PC-9 (cell line): ENCODE measurements at regions of chr13 and their contacts with region 1.

Region 1: DNA sequence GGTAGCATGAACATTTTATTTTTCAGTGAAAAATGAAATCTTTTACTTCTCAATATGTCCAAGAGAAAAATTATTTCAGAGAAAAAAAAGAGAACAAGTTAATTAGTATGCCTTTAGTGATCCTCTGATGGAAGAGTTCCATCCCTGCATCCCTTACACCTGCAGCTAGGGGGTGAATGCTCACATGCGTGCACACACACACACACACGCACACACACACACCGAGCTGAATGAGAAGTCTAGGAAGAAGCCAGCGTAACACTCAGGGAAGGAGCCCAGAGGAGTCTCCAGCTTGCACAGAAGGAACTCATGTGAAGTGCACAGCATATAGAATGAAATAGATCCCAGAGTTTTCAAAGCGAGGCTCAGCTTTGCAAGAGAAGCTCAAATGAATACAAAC is 510.5 kb downstream of the IRS2 start:
- DNase-seq: no peak
- H3K4me3 ChIP-seq: no peak overlapping the region
- H3K27ac ChIP-seq: no peak overlapping the region
- H3K4me1 ChIP-seq: peaks cover 47% of the 10 kb centered on the region
- H3K27me3 ChIP-seq: no peaks in the 10 kb centered on the region
- CTCF ChIP-seq: peak; percentile 46; the same call in 1 of the 2 replicates

Region 2: DNA sequence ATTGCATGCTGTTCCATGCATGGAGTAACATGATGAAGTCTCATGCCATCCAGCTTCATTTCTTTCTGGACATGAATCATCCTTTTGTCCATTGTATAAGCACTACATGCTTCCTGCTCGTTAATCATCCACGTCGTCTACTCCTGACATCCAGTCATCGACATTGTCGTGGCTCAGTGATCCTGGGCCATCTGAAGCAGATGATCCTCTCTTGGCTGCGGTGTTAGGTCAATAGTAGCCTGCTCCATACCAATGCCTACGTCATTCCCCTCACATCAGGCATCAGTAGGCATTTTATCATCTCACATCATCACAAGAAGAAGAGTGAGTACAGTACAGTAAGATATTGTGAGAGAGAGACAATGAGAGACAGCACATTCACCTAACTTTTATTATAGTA is 654.4 kb before region 1 on chr13:
- CTCF ChIA-PET with region 1: no interaction called
- POLR2A ChIA-PET with region 1: no interaction called
- intact Hi-C with region 1: no loop called
- DNase-seq: no peak
- H3K4me3 ChIP-seq: no peak overlapping the region
- H3K27ac ChIP-seq: no peak overlapping the region
- H3K4me1 ChIP-seq: no peaks in the 10 kb centered on the region
- H3K27me3 ChIP-seq: 0 out of 2 replicates have a peak, but pooled peaks cover 7% of the 10 kb centered on the region
- CTCF ChIP-seq: no peak

Region 3: GRCh38 chr13:108915634-108916512 is 360.0 kb before region 1 on chr13:
- CTCF ChIA-PET with region 1: no interaction called
- POLR2A ChIA-PET with region 1: no interaction called
- intact Hi-C with region 1: loop called (anchors 5 kb)
- DNase-seq: peak; percentile 81 to 96
- H3K4me3 ChIP-seq: peak overlapping the region; percentile 47
- H3K27ac ChIP-seq: peak overlapping the region; percentile 96
- H3K4me1 ChIP-seq: peaks cover 56% of the 10 kb centered on the region
- H3K27me3 ChIP-seq: no peaks in the 10 kb centered on the region
- CTCF ChIP-seq: no peak

Region 4: GRCh38 chr13:109309625-109310363 is 33.9 kb after region 1 on chr13:
- CTCF ChIA-PET with region 1: no interaction called
- POLR2A ChIA-PET with region 1: no interaction called
- intact Hi-C with region 1: no loop called
- DNase-seq: no peak
- H3K4me3 ChIP-seq: no peak overlapping the region
- H3K27ac ChIP-seq: no peak overlapping the region
- H3K4me1 ChIP-seq: no peaks in the 10 kb centered on the region
- H3K27me3 ChIP-seq: no peaks in the 10 kb centered on the region
- CTCF ChIP-seq: no peak

Region 5: DNA sequence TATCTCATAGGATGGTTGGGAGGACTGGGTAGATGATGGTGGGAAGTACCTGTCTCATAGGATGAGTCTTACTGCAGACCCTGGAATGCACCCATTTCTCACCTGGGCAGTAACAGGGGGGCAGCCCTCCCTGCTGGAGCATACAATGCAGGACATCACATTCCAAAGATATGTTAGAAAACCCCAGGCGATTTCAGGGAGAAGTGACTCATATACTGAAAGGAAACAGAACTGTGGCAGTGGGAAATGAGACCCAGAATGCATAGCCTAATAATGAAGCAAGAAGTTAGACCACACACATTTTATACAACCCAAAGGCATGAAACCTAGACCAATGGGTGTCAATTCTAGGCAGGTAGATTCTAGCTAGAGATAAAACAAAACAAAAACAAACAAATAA is 107.8 kb after region 1 on chr13:
- CTCF ChIA-PET with region 1: no interaction called
- POLR2A ChIA-PET with region 1: interaction called, 11 read pairs
- intact Hi-C with region 1: loop called (anchors 2 kb)
- DNase-seq: peak; percentile 35 to 95
- H3K4me3 ChIP-seq: no peak overlapping the region
- H3K27ac ChIP-seq: peak overlapping the region; percentile 61
- H3K4me1 ChIP-seq: peaks cover 26% of the 10 kb centered on the region
- H3K27me3 ChIP-seq: no peaks in the 10 kb centered on the region
- CTCF ChIP-seq: 0 out of 2 replicates have a peak, but pooled peaks have one; percentile 21

Region 6: GRCh38 chr13:109667056-109667455 is 391.2 kb after region 1 on chr13:
- CTCF ChIA-PET with region 1: no interaction called
- POLR2A ChIA-PET with region 1: no interaction called
- intact Hi-C with region 1: loop called (anchors 5 kb)
- DNase-seq: peak; percentile 38 to 90
- H3K4me3 ChIP-seq: peak overlapping the region; percentile 52
- H3K27ac ChIP-seq: peak overlapping the region; percentile 94
- H3K4me1 ChIP-seq: peaks cover 66% of the 10 kb centered on the region
- H3K27me3 ChIP-seq: no peaks in the 10 kb centered on the region
- CTCF ChIP-seq: no peak

Region 7: DNA sequence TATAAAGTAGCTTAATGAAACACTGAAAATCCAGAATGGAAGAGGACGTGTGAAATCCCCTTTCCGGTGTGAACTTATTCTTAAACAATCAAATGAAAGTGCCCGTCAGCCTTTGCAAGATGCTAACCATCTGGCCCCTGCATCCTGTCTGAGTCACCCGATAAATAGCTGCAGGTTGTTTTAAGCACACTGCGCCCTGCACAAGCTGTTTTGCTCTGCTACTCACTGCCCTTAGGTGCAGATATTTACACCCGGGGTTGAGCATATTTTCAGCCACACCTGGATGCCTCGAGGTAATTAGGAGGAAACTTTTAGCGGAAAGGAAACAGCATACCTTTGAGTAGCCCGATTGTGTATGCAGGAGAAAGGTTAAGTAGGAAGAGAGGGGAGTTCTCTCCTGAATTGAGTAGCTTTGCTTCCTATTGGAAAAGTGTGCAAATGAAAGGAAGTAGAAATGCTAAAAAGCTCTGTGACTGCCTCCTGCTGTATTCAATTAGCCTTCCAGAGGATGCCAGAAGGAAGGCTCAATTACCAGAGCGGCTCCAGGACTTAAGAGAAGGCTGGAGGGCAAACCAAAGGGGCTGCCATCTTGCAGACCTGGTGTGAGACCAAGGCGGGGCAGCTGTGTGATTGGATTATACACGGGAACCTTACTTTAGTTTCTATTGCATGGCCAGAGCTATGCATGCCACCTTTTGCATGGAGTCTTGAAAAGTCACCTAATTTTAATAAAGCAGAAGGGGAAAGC is 468.0 kb after region 1 on chr13:
- CTCF ChIA-PET with region 1: no interaction called
- POLR2A ChIA-PET with region 1: interaction called, 5 read pairs
- intact Hi-C with region 1: loop called (anchors 1 kb)
- DNase-seq: peak; percentile 82 to 100
- H3K4me3 ChIP-seq: peak overlapping the region; percentile 37
- H3K27ac ChIP-seq: peak overlapping the region; percentile 94
- H3K4me1 ChIP-seq: peaks cover 45% of the 10 kb centered on the region
- H3K27me3 ChIP-seq: no peaks in the 10 kb centered on the region
- CTCF ChIP-seq: no peak

Region 8: GRCh38 chr13:109998726-109999533 is 723.1 kb after region 1 on chr13:
- CTCF ChIA-PET with region 1: no interaction called
- POLR2A ChIA-PET with region 1: no interaction called
- intact Hi-C with region 1: loop called (anchors 5 kb)
- DNase-seq: peak; percentile 71 to 100
- H3K4me3 ChIP-seq: peak overlapping the region; percentile 1; the same call in 1 of the 2 replicates
- H3K27ac ChIP-seq: peak overlapping the region; percentile 45
- H3K4me1 ChIP-seq: peaks cover 50% of the 10 kb centered on the region
- H3K27me3 ChIP-seq: no peaks in the 10 kb centered on the region
- CTCF ChIP-seq: peak; percentile 33; the same call in 1 of the 2 replicates

Region 9: GRCh38 chr13:110138010-110138699 is 862.3 kb after region 1 on chr13:
- CTCF ChIA-PET with region 1: no interaction called
- POLR2A ChIA-PET with region 1: no interaction called
- intact Hi-C with region 1: loop called (anchors 2 kb)
- DNase-seq: peak; percentile 82 to 94
- H3K4me3 ChIP-seq: peak overlapping the region; percentile 67
- H3K27ac ChIP-seq: peak overlapping the region; percentile 95
- H3K4me1 ChIP-seq: peaks cover 42% of the 10 kb centered on the region
- H3K27me3 ChIP-seq: no peaks in the 10 kb centered on the region
- CTCF ChIP-seq: peak; percentile 42; the same call in 1 of the 2 replicates